Activated CD4-positive, alpha-beta memory T cell treated with anti-CD3 and anti-CD28 coated beads, Interleukin-2, amount 10 ng/mL, durations not matched to agents 7 days and 5 days (primary cell): ENCODE measurements at regions of chr5 and their contacts with region 1.

Region 1: DNA sequence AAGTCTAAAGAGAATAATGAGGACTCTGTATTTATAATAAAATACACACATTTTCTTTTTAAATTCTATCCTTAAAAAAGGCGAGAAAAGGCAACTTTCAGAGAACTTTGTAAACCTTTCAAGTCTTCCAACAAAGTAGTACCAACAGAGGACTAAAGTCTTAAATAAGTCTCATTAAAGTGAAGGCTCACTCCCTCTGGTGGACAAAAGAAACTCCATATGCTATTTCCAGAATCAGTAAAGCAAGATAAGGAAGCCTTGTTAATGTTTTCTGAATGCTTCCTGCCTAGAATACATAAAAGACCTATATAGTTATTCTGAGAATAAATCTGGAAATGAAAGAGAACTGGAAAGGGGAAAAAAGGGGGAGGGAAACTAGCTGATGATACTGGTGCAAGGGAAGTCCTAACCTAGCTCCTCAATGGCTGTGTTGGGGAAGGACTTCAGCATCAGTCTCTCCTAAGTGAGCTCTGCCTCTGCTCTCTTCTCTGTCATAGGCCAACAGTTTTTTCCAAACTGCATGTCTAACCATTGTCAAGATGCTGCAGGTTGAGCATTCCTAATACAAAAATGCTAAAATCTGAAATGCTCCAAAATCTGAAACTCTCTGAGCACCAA is 7.2 kb downstream of the HMGCS1 start:
- DNase-seq: no peak
- H3K4me3 Mint-ChIP-seq: no peak overlapping the region
- H3K27ac Mint-ChIP-seq: peak overlapping the region; percentile 53
- H3K4me1 Mint-ChIP-seq: peaks cover 80% of the 10 kb centered on the region
- H3K27me3 Mint-ChIP-seq: no peaks in the 10 kb centered on the region

Region 2: GRCh38 chr5:43105369-43106289 is 200.4 kb before region 1 on chr5:
- CTCF ChIA-PET with region 1: interaction called, 24 read pairs
- POLR2A ChIA-PET with region 1: no interaction called
- DNase-seq: peak; percentile 90
- H3K4me3 Mint-ChIP-seq: peak overlapping the region; percentile 78
- H3K27ac Mint-ChIP-seq: peak overlapping the region; percentile 83
- H3K4me1 Mint-ChIP-seq: peaks cover 45% of the 10 kb centered on the region
- H3K27me3 Mint-ChIP-seq: no peaks in the 10 kb centered on the region

Region 3: DNA sequence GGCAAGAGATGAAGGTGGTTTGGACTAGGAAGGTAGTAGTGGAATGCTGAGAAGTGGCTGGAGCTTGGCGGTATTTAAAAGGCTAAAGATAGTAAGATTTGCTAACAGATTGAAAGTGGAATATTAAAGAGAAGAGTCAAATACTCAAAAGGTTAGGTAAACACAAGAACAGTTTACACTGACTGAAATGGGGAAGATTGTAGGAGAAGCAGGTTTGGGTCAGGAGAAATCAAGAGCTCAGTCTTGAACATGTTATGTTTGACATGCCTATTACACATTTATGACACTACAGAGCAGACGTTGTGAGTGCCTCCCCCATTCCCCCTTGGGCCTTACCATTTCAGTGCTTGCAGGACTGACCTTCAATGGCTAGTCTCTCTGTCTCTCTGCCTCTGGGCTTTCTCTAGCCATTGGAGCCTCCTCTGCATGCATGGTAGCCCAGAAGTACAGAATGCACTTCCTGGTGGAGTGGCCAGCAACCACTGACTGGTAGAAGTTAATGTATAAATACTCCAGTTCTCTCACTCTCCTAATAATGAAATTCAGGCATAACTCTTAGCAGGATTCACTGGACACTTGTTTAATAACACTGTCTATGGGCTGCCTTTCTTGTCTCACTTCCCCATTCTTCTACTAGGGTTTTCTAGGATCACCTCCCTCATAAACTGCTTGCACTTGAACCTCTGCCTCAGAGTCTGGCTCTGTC is 49.6 kb before region 1 on chr5:
- CTCF ChIA-PET with region 1: no interaction called
- POLR2A ChIA-PET with region 1: no interaction called
- DNase-seq: no peak
- H3K4me3 Mint-ChIP-seq: no peak overlapping the region
- H3K27ac Mint-ChIP-seq: no peak overlapping the region
- H3K4me1 Mint-ChIP-seq: peaks cover 3% of the 10 kb centered on the region
- H3K27me3 Mint-ChIP-seq: peaks cover 39% of the 10 kb centered on the region